Posterior vena cava (tissue), 2 donors: ENCODE measurements at regions of chr2 and their contacts with region 1.

Region 1: GRCh38 chr2:231612179-231613053 is 19.8 kb downstream of the TEX44 start:
- DNase-seq: peak; percentile 98

Region 2: GRCh38 chr2:231348173-231348572 is 264.2 kb before region 1 on chr2:
- intact Hi-C with region 1: no loop called
- DNase-seq: no peak

Region 3: GRCh38 chr2:231640641-231641135 is 28.3 kb after region 1 on chr2:
- intact Hi-C with region 1: loop called in 1 of 2 experiments (anchors 2 kb)
- DNase-seq: peak; percentile 86

Region 4: GRCh38 chr2:231674587-231675338 is 62.3 kb after region 1 on chr2:
- intact Hi-C with region 1: loop called (anchors 2 kb)
- DNase-seq: peak; percentile 91

Region 5: GRCh38 chr2:231713730-231714430 is 101.5 kb after region 1 on chr2:
- intact Hi-C with region 1: loop called in 1 of 2 experiments (anchors 2 kb)
- DNase-seq: peak; percentile 97

Region 6: GRCh38 chr2:232113821-232114220 is 501.4 kb after region 1 on chr2:
- intact Hi-C with region 1: no loop called
- DNase-seq: no peak